PC-3 (cell line): ENCODE measurements at regions of chr2 and their contacts with region 1.

Region 1: GRCh38 chr2:67476809-67477790 is 80.0 kb downstream of the ETAA1 start:
- DNase-seq: peak; percentile 76
- ATAC-seq: peak; percentile 90
- H3K4me3 ChIP-seq: no peak overlapping the region
- H3K27ac ChIP-seq: peak overlapping the region; percentile 5
- H3K4me1 ChIP-seq: peaks cover 12% of the 10 kb centered on the region
- H3K27me3 ChIP-seq: no peaks in the 10 kb centered on the region
- CTCF ChIP-seq: peak; percentile 81

Region 2: GRCh38 chr2:67234439-67234838 is 242.7 kb before region 1 on chr2:
- CTCF ChIA-PET with region 1: no interaction called
- POLR2A ChIA-PET with region 1: no interaction called
- intact Hi-C with region 1: loop called (anchors 1 kb)
- DNase-seq: peak; percentile 51
- ATAC-seq: peak; percentile 56; the same call in 1 of the 2 replicates
- H3K4me3 ChIP-seq: no peak overlapping the region
- H3K27ac ChIP-seq: no peak overlapping the region
- H3K4me1 ChIP-seq: no peaks in the 10 kb centered on the region
- H3K27me3 ChIP-seq: no peaks in the 10 kb centered on the region
- CTCF ChIP-seq: peak; percentile 62

Region 3: GRCh38 chr2:67445698-67446268 is 31.3 kb before region 1 on chr2:
- CTCF ChIA-PET with region 1: no interaction called
- POLR2A ChIA-PET with region 1: no interaction called
- intact Hi-C with region 1: loop called (anchors 2 kb)
- DNase-seq: peak; percentile 61
- ATAC-seq: peak; percentile 28
- H3K4me3 ChIP-seq: no peak overlapping the region
- H3K27ac ChIP-seq: peak overlapping the region; percentile 52
- H3K4me1 ChIP-seq: peaks cover 32% of the 10 kb centered on the region
- H3K27me3 ChIP-seq: no peaks in the 10 kb centered on the region
- CTCF ChIP-seq: no peak

Region 4: DNA sequence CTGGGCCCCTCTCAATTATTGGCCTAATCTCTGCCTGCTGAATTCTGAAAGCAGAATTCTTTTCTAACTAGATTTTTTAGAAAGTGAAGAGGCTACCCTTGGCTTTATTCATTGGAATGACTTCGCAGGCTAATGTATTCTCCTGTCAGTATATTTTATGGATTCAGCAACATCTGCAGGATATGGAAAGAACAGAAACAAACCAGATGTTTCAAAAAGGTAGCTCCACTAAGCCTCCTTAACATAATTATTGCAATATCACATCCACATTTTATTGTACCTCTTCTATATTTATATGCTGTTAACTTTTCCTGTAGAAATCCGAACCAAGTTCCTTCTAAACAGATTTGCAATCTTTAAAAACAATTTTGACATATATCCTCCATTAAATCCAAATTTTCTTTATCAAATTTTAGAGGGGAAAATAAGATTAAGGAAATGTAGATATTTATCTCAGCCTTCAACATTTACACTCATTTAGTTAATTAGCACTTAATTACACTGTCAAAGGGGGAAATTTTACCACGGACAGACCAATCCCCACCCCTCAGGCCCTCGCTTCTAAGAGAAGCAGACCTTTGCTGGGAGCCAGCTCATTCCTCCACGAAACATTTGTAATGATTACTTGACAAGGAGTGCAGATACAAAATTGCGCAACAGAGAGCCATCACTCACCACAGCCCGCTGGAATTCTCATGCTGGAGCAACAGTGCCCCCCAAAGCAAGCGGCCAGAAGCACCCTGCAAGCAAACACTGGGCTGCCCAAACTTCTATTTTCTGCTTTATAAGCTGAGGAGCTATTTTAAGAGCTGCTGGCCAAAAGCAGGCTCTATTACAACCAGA is 173.4 kb after region 1 on chr2:
- CTCF ChIA-PET with region 1: interaction called, 12 read pairs
- POLR2A ChIA-PET with region 1: no interaction called
- intact Hi-C with region 1: loop called (anchors 1 kb)
- DNase-seq: peak; percentile 85
- ATAC-seq: peak; percentile 100
- H3K4me3 ChIP-seq: no peak overlapping the region
- H3K27ac ChIP-seq: 0 out of 2 replicates have a peak overlapping the region, but pooled peaks have one; percentile 19
- H3K4me1 ChIP-seq: peaks cover 6% of the 10 kb centered on the region
- H3K27me3 ChIP-seq: no peaks in the 10 kb centered on the region
- CTCF ChIP-seq: peak; percentile 90

Region 5: DNA sequence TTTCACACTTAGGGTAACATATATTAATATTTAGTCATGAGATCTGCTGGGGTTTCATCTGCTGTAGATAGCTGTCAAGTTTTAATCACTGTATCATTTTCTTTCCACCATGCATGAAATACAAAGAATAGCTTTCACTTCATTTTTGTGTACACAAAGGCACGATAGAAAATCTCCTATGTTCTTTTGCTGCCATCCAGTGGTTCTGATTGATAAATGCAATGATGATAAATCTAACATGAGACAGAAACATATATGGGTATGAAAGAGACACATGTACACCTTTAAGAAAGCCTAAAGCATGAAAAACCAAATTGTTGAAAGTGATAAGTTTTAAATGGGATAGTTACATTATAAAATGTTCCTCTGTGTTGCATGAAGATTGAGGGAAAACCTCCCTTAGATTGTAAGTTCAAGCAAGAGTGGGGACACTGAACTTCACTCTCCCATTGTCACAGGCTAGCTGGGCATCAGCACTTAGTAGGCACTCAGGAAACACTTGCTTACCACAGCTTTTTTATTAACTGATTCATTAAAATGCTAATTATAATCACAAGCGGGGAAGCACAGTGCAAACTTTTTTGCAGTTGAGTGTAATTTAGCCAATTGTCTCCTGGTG is 554.6 kb after region 1 on chr2:
- CTCF ChIA-PET with region 1: no interaction called
- POLR2A ChIA-PET with region 1: no interaction called
- intact Hi-C with region 1: loop called (anchors 10 kb)
- DNase-seq: peak; percentile 85
- ATAC-seq: peak; percentile 73
- H3K4me3 ChIP-seq: no peak overlapping the region
- H3K27ac ChIP-seq: no peak overlapping the region
- H3K4me1 ChIP-seq: peaks cover 14% of the 10 kb centered on the region
- H3K27me3 ChIP-seq: no peaks in the 10 kb centered on the region
- CTCF ChIP-seq: peak; percentile 88

Region 6: GRCh38 chr2:68961380-68961779 is 1484.3 kb after region 1 on chr2:
- CTCF ChIA-PET with region 1: no interaction called
- POLR2A ChIA-PET with region 1: no interaction called
- intact Hi-C with region 1: no loop called
- DNase-seq: no peak
- ATAC-seq: no peak
- H3K4me3 ChIP-seq: no peak overlapping the region
- H3K27ac ChIP-seq: no peak overlapping the region
- H3K4me1 ChIP-seq: no peaks in the 10 kb centered on the region
- H3K27me3 ChIP-seq: no peaks in the 10 kb centered on the region
- CTCF ChIP-seq: no peak